WTC11 (cell line): ENCODE measurements at regions of chr11 and their contacts with region 1.

Region 1: DNA sequence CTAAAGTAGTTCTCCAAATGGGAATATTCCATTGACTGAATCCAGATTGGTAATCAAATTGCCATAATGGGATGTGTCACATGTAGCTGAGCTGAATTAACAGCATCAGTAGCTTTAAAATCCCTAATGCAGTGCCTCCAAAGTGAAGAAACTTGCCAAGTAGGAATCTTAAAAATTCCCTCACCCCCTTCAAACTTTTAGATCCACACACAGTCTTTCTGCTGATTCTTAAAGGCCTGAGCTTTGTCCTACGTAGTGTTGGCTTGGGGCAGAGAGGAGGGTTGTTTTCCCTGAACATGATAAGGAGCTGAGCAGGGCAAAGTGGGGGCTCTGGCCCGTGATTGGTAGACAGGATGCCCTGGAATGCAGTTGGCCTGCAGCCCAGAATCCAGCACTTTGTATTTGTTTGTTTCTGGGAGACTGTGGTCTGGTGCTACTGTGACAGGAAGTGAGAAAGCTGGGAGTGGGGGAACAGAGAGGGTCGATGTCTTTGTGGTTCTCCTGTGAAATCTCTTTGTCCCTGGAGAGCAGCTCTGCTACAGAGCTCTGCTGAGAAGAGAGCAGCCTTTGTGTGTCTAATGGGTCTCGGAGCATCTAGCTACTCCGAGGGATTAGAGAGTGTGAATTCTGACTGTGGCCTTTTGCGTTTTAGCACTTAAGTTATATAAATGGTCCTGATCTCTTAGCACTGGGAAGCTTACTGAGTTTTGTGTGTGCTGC is 16.9 kb downstream of the CTNND1 start:
- DNase-seq: peak; percentile 80
- ATAC-seq: peak; percentile 77
- H3K4me3 Mint-ChIP-seq: peak overlapping the region; percentile 51
- H3K27ac Mint-ChIP-seq: peak overlapping the region; percentile 99
- H3K4me1 Mint-ChIP-seq: peaks cover 91% of the 10 kb centered on the region
- H3K27me3 Mint-ChIP-seq: no peaks in the 10 kb centered on the region
- CTCF ChIP-seq: no peak

Region 2: DNA sequence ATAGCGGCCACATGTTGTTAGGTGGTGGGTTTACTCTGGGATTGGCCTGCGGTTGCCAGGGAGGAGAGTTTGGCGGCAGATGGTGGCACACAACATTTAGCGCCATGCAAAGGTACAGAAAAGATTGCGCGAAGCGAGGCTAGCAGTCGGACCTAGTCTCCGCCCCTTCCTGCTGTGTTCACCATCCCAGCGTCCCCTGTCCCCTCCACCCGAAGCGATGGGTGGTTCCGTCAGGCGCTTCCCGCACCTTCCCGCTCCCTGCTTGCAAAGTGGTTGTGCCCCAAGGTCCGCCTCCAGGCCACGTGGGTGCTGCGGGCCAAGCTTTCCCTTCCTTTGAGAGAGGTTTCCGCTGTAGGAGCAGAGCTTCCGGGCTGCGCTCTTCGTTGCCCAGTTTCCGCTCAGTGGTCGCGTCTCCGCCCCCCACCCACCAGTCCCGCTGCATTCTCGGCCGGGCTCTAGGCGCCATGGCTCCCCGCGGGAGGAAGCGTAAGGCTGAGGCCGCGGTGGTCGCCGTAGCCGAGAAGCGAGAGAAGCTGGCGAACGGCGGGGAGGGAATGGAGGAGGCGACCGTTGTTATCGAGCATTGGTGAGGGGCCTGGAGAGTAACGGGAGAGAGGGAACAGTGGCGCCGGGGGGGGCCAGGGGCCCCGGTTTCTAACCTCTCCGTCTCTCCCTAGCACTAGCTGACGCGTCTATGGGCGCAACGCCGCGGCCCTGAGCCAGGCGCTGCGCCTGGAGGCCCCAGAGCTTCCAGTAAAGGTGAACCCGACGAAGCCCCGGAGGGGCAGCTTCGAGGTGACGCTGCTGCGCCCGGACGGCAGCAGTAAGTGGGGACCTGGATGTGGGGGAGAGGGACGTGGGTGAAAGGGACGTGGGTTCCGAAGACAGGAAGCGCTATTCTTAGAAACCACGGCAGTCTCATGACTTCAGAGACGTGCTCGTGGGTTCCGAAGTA is 37.1 kb before region 1 on chr11 and contains the start of gene SELENOH:
- CTCF ChIA-PET with region 1: no interaction called
- POLR2A ChIA-PET with region 1: interaction called, 22 read pairs
- DNase-seq: peak; percentile 98
- ATAC-seq: peak; percentile 96
- H3K4me3 Mint-ChIP-seq: peak within 1 kb of the TSS; percentile 94
- H3K27ac Mint-ChIP-seq: peak within 1 kb of the TSS; percentile 97
- H3K4me1 Mint-ChIP-seq: peaks cover 15% of the 10 kb centered on the region
- H3K27me3 Mint-ChIP-seq: no peaks in the 10 kb centered on the region
- CTCF ChIP-seq: no peak
- total RNA-seq, gene SELENOH: 251 to 266 TPM (median 259 TPM) in 3 replicates

Region 3: GRCh38 chr11:57751676-57752253 is 26.7 kb before region 1 on chr11 and contains the start of gene BTBD18:
- CTCF ChIA-PET with region 1: interaction called, 29 read pairs
- POLR2A ChIA-PET with region 1: interaction called, 10 read pairs
- DNase-seq: peak; percentile 32
- ATAC-seq: peak; percentile 86
- H3K4me3 Mint-ChIP-seq: no peak within 1 kb of the TSS
- H3K27ac Mint-ChIP-seq: peak within 1 kb of the TSS; percentile 75
- H3K4me1 Mint-ChIP-seq: peaks cover 21% of the 10 kb centered on the region
- H3K27me3 Mint-ChIP-seq: no peaks in the 10 kb centered on the region
- CTCF ChIP-seq: peak; percentile 24; the same call in 1 of the 2 replicates
- total RNA-seq, gene BTBD18: 0.09 to 0.14 TPM in 2 of 3 replicates, not detected in the other

Region 4: GRCh38 chr11:57761301-57762234 is 16.9 kb before region 1 on chr11 and contains the start of gene CTNND1:
- CTCF ChIA-PET with region 1: interaction called, 43 read pairs
- POLR2A ChIA-PET with region 1: interaction called, 188 read pairs
- DNase-seq: peak; percentile 74
- ATAC-seq: peak; percentile 96
- H3K4me3 Mint-ChIP-seq: peak within 1 kb of the TSS; percentile 99
- H3K27ac Mint-ChIP-seq: peak within 1 kb of the TSS; percentile 100
- H3K4me1 Mint-ChIP-seq: peaks cover 34% of the 10 kb centered on the region
- H3K27me3 Mint-ChIP-seq: no peaks in the 10 kb centered on the region
- CTCF ChIP-seq: no peak
- total RNA-seq, gene CTNND1: 164 to 165 TPM (median 164 TPM) in 3 replicates